ENCODE measurements at regions of chr2 and their contacts with region 1.

Region 1: DNA sequence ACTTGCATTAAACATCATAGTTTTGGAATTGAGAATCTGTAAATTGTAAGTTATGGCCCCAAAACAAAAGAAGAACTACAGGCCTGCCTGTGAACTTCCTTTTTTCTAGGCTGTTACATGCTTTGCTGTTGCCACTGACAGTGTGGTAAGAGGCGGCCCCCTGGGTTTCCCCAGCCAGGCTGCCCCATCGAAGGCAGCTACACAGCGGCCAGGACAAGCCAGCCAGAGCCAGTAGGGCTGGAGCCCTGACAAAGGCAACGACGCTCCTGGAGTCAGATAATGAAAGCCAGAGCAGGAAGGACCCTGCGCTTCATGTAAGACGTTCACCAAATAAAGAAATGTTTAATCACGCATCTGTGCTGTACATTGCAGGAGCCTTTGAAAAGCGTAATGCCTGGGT is 55.0 kb downstream of the ANKRD44 start:
- DNase-seq: peak; percentile 78
- H3K4me3 Mint-ChIP-seq: peak overlapping the region; percentile 83
- H3K27ac Mint-ChIP-seq: peak overlapping the region; percentile 97
- H3K4me1 Mint-ChIP-seq: peaks cover 80% of the 10 kb centered on the region
- H3K27me3 Mint-ChIP-seq: no peaks in the 10 kb centered on the region

Region 2: DNA sequence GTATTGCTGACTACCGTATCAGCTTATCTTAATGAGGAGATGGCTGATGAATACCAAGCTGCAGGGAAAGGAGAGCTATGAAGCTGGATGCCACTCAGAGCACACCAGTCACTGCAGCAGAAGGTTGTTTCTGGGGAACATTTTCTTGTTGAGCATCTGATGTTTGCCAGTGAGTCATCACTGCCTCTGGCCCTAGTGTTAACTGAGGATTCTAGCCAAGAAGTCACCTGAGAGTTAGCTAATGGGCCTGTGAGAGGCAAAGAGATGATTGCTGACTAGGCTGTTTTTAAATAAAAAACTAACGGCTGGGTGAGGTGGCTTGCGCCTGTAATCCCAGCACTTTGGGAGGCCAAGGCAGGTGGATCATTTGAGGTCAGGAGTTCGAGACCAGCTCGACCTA is 578.1 kb before region 1 on chr2:
- intact Hi-C with region 1: no loop called
- DNase-seq: no peak
- H3K4me3 Mint-ChIP-seq: no peak overlapping the region
- H3K27ac Mint-ChIP-seq: no peak overlapping the region
- H3K4me1 Mint-ChIP-seq: no peaks in the 10 kb centered on the region
- H3K27me3 Mint-ChIP-seq: no peaks in the 10 kb centered on the region

Region 3: DNA sequence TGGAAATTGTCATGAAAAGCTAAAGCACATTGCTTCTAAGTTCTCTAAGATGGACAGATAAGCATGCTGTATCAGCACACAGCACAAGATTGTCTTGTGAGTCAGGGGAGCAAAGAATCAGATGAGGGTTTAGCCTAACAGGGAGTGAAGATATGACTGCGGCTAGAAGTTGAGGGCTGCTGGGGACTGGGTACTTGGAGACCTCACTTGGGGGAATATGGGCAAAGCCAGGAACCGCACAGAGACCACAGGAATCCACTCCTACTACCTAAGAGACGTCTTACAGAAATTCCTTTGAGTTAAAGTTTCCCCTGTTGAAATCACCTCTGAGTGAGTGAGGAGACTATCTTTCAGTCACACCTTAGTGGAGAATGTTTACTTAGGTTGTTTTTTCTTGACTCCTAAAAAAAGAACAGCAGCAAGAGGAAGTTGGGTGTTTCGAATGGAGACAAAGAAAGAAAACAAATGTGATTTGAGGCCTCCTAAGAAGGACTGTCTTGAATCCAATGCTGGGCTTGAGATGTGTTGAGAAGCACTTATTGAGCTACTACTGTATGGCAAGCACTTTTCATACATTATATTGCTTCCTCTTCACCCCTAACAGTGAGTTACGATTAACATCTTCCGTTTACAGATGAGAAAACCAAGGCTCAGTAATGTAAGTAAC is 45.7 kb before region 1 on chr2:
- intact Hi-C with region 1: loop called (anchors 2 kb)
- DNase-seq: peak; percentile 53
- H3K4me3 Mint-ChIP-seq: peak overlapping the region; percentile 69
- H3K27ac Mint-ChIP-seq: peak overlapping the region; percentile 97
- H3K4me1 Mint-ChIP-seq: peaks cover 95% of the 10 kb centered on the region
- H3K27me3 Mint-ChIP-seq: no peaks in the 10 kb centered on the region

Region 4: GRCh38 chr2:197239434-197239833 is 16.1 kb before region 1 on chr2:
- intact Hi-C with region 1: loop called (anchors 1 kb)
- DNase-seq: no peak
- H3K4me3 Mint-ChIP-seq: peak overlapping the region; percentile 80
- H3K27ac Mint-ChIP-seq: peak overlapping the region; percentile 94
- H3K4me1 Mint-ChIP-seq: peaks cover 82% of the 10 kb centered on the region
- H3K27me3 Mint-ChIP-seq: no peaks in the 10 kb centered on the region

Region 5: DNA sequence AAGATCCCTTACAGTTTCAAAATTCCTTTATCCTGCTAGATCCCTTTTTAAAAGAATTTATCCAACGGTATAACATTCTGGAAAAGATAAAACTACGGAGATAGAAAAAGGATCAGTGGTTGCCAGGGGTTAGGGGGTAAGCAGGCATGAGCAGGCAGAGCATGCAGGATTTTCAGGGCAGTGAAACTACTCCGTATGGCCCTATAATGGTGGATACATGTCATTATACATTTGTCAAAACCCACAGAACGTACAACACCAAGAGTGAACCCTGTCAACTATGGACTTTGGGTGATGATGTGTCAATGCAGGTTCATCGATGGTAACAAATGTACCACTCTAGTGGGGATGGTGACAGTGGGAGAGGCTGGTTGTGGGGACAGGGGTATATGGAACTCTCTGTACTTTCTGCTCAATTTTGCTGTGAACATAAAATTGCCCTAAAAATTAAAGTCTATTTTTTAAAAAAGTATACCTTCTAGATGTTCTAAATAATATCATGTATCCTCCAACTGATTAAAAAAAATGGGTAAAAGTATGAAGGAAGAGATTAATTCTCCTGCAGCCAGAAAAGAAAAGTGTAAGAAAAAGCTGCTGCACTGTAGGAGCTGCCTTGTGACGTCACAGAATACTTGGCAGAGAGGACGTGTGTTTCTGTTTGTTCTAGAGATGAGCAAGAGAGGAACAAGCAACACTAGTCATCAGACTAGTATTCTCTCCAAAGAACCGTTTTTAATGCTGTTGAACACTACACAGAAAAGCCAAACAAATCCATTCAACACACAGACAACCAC is 31.5 kb after region 1 on chr2:
- intact Hi-C with region 1: loop called (anchors 1 kb)
- DNase-seq: peak; percentile 49
- H3K4me3 Mint-ChIP-seq: peak overlapping the region; percentile 76
- H3K27ac Mint-ChIP-seq: peak overlapping the region; percentile 100
- H3K4me1 Mint-ChIP-seq: peaks cover 78% of the 10 kb centered on the region
- H3K27me3 Mint-ChIP-seq: no peaks in the 10 kb centered on the region

Region 6: DNA sequence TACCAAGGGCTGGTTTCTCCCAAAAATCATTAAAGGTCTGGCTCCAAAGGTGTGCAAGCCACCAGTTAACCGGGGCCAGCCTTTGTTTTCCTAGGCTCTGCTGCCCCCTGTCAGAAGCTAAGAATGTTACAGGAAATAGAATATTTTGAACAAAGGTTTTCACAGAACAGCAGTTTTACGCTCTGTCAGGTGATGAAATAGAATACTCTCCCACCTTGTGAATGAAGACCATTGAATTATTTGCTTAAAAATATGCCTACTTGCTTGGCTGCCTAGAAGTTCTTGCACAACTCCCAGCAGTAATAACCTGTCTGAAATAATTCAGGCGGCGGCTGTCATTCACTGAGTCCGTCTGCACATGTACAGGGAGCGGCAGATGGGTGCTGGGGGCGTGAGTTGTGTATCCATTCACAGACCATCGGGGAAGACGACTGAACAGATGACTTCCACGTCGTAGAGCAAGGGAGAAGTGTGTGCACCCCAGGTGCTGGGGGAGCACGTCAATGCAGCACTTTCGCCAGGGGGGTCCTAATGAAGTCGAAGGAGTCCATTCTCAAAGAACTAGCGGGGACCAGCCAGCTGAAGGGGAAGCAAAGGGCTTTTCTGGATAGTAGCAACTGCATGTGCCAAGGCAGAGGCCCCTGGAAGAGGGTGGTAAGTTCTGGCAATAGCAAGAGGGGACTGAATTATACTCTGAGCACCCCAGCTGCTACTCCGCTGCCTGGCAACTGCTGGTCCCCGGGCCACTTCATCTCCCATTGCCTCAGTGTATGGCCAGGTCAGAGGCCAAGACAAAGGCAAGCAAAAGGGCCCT is 123.2 kb after region 1 on chr2:
- intact Hi-C with region 1: loop called (anchors 5 kb)
- DNase-seq: peak; percentile 40
- H3K4me3 Mint-ChIP-seq: no peak overlapping the region
- H3K27ac Mint-ChIP-seq: peak overlapping the region; percentile 11
- H3K4me1 Mint-ChIP-seq: peaks cover 24% of the 10 kb centered on the region
- H3K27me3 Mint-ChIP-seq: peaks cover 10% of the 10 kb centered on the region

Region 7: GRCh38 chr2:197434541-197435513 is 179.3 kb after region 1 on chr2 and contains the start of gene SF3B1:
- intact Hi-C with region 1: no loop called
- DNase-seq: peak; percentile 99
- H3K4me3 Mint-ChIP-seq: peak within 1 kb of the TSS; percentile 95
- H3K27ac Mint-ChIP-seq: peak within 1 kb of the TSS; percentile 99
- H3K4me1 Mint-ChIP-seq: peaks cover 50% of the 10 kb centered on the region
- H3K27me3 Mint-ChIP-seq: no peaks in the 10 kb centered on the region
- total RNA-seq, gene SF3B1: 247 and 268 TPM in 2 replicates

Region 8: DNA sequence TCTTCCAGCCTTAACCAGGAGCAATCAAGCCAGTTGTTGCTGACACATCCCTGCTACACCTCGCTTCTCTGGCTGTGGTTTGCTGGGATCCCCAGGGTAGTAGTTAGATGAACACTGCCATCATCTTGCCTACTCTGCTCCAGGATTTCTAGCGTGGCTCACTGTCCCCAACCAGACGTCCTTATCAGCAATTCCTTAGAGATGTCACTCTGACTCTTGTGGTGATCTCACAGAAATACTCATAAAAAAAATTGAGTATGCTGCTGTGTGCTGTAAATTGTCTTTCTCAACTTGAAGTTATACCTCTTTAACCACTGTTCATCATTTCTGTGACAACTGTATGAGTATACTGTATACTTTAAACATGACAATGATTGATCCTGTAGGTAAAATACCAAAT is 612.1 kb after region 1 on chr2:
- intact Hi-C with region 1: no loop called
- DNase-seq: no peak
- H3K4me3 Mint-ChIP-seq: no peak overlapping the region
- H3K27ac Mint-ChIP-seq: no peak overlapping the region
- H3K4me1 Mint-ChIP-seq: peaks cover 51% of the 10 kb centered on the region
- H3K27me3 Mint-ChIP-seq: no peaks in the 10 kb centered on the region

Region 9: DNA sequence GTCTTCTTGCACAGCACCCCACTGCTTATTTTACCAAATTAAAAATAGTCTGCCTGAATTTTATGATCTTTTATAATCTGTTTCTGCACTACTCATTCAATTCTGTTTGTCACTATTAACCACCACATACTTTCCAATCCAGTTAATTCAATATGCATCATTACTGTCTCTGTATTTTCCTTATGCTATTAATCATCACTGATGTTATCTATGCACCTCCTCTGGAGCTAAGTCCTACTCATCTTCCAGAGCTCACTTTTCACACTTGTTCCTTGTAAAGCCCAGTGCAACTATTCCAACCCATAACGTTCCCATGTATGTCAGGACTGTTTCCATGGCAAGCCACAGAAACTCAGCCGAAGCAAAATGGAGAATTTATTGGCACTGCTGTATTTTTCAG is 1262.4 kb after region 1 on chr2:
- intact Hi-C with region 1: no loop called
- DNase-seq: no peak
- H3K4me3 Mint-ChIP-seq: no peak overlapping the region
- H3K27ac Mint-ChIP-seq: no peak overlapping the region
- H3K4me1 Mint-ChIP-seq: no peaks in the 10 kb centered on the region
- H3K27me3 Mint-ChIP-seq: no peaks in the 10 kb centered on the region

Measured in activated T-helper 1 cell treated with anti-CD3 and anti-CD28 coated beads, Interleukin-12 subunit alpha, Interleukin-12 subunit beta, Interleukin-2, Interleukin-4 antibody, amounts not matched to agents 30 ng/mL and 10 ng/mL and 1 ng/mL, durations not matched to agents 14 hours and 24 hours and 36 hours (primary cell).